Activated CD8-positive, alpha-beta T cell treated with anti-CD3 and anti-CD28 coated beads for 36 hours (primary cell): ENCODE measurements at regions of chr15 and their contacts with region 1.

Region 1: DNA sequence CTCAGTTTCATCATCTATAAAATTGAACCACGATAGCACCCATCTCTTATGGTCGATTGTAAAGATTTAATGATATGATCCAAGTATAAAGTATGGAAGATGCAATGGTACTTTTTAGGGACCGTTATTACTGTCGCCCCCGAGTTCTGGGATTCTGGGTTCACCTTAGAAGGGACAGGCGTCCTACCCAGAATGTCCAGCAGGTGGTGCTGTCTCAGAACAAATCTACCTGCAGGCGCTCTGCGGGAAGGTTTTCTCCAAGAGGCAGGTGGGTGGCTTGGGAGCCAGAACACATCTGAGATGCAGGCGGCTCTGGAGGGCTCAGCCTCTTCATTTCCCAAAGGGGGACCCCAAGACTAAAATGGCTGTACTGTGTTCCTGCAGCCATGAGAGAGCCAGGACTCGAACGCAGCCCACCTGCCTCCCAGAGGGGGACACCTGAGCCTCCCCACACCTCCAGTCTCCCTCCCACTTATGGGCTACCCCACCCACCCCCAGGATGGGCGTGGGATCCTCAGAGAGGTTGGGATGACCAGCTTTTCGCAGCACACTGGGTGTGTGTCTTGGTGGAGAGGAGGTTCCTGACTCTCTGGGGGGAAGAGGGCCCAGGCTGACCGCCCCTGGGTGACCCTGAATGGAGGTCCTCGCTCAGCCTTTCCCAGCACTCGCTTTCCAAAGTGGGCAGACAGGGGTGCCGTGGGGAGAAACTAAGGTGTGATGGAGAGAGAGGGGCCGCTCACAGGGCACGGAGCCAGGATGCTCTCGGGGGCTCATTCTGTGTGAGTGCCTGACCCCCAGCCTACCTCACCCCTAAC is 28.1 kb upstream of the CORO2B start:
- DNase-seq: peak; percentile 87
- ATAC-seq: peak; percentile 62
- H3K4me3 Mint-ChIP-seq: no peak overlapping the region
- H3K27ac Mint-ChIP-seq: no peak overlapping the region
- H3K4me1 Mint-ChIP-seq: peaks cover 3% of the 10 kb centered on the region
- H3K27me3 Mint-ChIP-seq: peaks cover 33% of the 10 kb centered on the region
- CTCF ChIP-seq: peak; percentile 90

Region 2: GRCh38 chr15:68372291-68372811 is 178.3 kb before region 1 on chr15:
- CTCF ChIA-PET with region 1: no interaction called
- POLR2A ChIA-PET with region 1: no interaction called
- intact Hi-C with region 1: no loop called
- DNase-seq: no peak
- ATAC-seq: no peak
- H3K4me3 Mint-ChIP-seq: no peak overlapping the region
- H3K27ac Mint-ChIP-seq: no peak overlapping the region
- H3K4me1 Mint-ChIP-seq: no peaks in the 10 kb centered on the region
- H3K27me3 Mint-ChIP-seq: peaks cover 1% of the 10 kb centered on the region
- CTCF ChIP-seq: no peak

Region 3: DNA sequence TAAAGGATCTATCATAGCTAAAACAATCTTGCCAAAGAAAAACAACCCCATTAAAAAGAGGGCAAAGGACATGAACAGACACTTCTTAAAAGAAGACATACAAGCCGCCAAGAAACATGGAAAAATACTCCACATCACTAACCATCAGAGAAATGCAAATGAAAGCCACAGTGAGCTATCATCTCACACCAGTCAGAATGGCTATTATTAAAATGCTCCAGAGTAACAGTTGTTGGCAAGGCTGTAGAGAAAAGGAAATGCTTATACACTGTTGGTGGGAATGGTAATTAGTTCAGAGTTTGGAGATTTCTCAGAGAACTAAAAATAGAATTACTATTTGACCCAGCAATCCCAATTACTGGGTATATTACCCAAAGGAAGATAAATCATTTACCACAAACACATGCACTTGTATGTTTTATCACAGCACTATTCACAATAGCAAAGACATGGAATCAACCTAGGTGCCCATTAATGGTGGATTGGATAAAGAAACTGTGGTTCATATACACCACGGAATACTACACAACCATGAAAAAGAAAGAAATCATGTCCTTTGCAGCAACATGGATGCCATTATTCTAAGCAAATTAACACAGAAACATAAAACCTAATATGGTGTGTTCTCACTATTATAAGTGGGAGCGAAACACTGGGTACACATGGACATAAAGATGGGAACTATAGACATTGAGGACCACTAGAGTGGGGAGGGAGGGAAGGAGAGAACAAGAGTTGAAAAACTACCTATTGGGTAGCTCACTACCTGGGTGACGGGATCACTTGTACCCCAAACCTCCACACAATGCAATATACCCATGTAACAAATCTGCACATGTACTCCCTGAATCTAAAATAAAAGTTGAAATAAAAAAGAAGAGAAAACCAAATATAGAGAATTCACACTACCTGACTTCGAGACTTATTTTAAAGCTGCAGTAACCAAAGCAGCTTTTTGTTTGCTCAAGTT is 151.3 kb before region 1 on chr15:
- CTCF ChIA-PET with region 1: no interaction called
- POLR2A ChIA-PET with region 1: no interaction called
- intact Hi-C with region 1: no loop called
- DNase-seq: no peak
- ATAC-seq: peak; percentile 37
- H3K4me3 Mint-ChIP-seq: no peak overlapping the region
- H3K27ac Mint-ChIP-seq: no peak overlapping the region
- H3K4me1 Mint-ChIP-seq: no peaks in the 10 kb centered on the region
- H3K27me3 Mint-ChIP-seq: peaks cover 5% of the 10 kb centered on the region
- CTCF ChIP-seq: no peak

Region 4: DNA sequence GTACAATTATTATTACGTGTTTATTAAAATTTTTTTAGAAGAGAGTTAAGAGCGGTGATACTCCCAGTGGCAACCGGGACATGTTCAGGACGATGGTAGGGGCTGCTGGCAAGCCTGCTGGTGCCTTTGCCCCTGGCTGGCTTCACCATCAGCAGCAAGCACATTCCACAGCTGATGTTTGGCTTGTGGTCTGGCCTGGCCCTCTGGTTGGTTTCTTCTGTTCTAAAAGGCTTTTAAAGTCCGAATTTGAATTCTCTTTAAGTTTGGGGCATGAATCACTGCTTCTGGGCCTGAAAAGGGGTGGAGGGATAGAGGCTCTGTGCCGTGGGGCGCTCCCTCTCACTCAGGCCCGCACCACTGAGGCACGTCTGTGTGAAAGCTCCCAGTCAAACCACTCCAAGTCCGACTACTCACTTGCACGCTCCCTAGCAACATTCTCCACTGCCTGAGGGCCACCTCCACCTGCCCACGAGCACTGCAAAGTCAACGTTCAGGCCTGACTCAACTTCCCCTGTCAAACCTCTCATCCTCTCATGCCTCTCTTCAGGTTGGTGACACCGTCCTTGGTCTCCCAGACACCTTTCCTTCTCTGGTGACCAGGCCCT is 128.8 kb before region 1 on chr15:
- CTCF ChIA-PET with region 1: no interaction called
- POLR2A ChIA-PET with region 1: no interaction called
- intact Hi-C with region 1: no loop called
- DNase-seq: no peak
- ATAC-seq: no peak
- H3K4me3 Mint-ChIP-seq: no peak overlapping the region
- H3K27ac Mint-ChIP-seq: no peak overlapping the region
- H3K4me1 Mint-ChIP-seq: no peaks in the 10 kb centered on the region
- H3K27me3 Mint-ChIP-seq: peaks cover under 1% of the 10 kb centered on the region
- CTCF ChIP-seq: no peak

Region 5: GRCh38 chr15:68526269-68526668 is 24.4 kb before region 1 on chr15:
- CTCF ChIA-PET with region 1: interaction called, 16 read pairs
- POLR2A ChIA-PET with region 1: no interaction called
- intact Hi-C with region 1: no loop called
- DNase-seq: no peak
- ATAC-seq: peak; percentile 80
- H3K4me3 Mint-ChIP-seq: no peak overlapping the region
- H3K27ac Mint-ChIP-seq: no peak overlapping the region
- H3K4me1 Mint-ChIP-seq: peaks cover 26% of the 10 kb centered on the region
- H3K27me3 Mint-ChIP-seq: peaks cover 14% of the 10 kb centered on the region
- CTCF ChIP-seq: no peak

Region 6: GRCh38 chr15:68565726-68566125 is 15.0 kb after region 1 on chr15:
- CTCF ChIA-PET with region 1: interaction called, 37 read pairs
- POLR2A ChIA-PET with region 1: interaction called, 3 read pairs
- intact Hi-C with region 1: no loop called
- DNase-seq: no peak
- ATAC-seq: no peak
- H3K4me3 Mint-ChIP-seq: no peak overlapping the region
- H3K27ac Mint-ChIP-seq: no peak overlapping the region
- H3K4me1 Mint-ChIP-seq: no peaks in the 10 kb centered on the region
- H3K27me3 Mint-ChIP-seq: peaks cover 17% of the 10 kb centered on the region
- CTCF ChIP-seq: no peak

Region 7: GRCh38 chr15:68666120-68666811 is 115.6 kb after region 1 on chr15:
- CTCF ChIA-PET with region 1: interaction called, 15 read pairs
- POLR2A ChIA-PET with region 1: no interaction called
- intact Hi-C with region 1: no loop called
- DNase-seq: no peak
- ATAC-seq: no peak
- H3K4me3 Mint-ChIP-seq: no peak overlapping the region
- H3K27ac Mint-ChIP-seq: no peak overlapping the region
- H3K4me1 Mint-ChIP-seq: no peaks in the 10 kb centered on the region
- H3K27me3 Mint-ChIP-seq: peaks cover 1% of the 10 kb centered on the region
- CTCF ChIP-seq: no peak

Region 8: GRCh38 chr15:68924866-68925560 is 374.3 kb after region 1 on chr15:
- CTCF ChIA-PET with region 1: interaction called, 39 read pairs
- POLR2A ChIA-PET with region 1: no interaction called
- intact Hi-C with region 1: no loop called
- DNase-seq: peak; percentile 83
- ATAC-seq: no peak
- H3K4me3 Mint-ChIP-seq: no peak overlapping the region
- H3K27ac Mint-ChIP-seq: no peak overlapping the region
- H3K4me1 Mint-ChIP-seq: no peaks in the 10 kb centered on the region
- H3K27me3 Mint-ChIP-seq: peaks cover 19% of the 10 kb centered on the region
- CTCF ChIP-seq: peak; percentile 76